Left cardiac atrium (tissue), 4 donors: ENCODE measurements at regions of chr6 and their contacts with region 1.

Region 1: GRCh38 chr6:11585426-11586016 is 48.0 kb downstream of the TMEM170B start:
- DNase-seq: no peak
- ATAC-seq: peak in 1 of 2 donors; percentile 48

Region 2: DNA sequence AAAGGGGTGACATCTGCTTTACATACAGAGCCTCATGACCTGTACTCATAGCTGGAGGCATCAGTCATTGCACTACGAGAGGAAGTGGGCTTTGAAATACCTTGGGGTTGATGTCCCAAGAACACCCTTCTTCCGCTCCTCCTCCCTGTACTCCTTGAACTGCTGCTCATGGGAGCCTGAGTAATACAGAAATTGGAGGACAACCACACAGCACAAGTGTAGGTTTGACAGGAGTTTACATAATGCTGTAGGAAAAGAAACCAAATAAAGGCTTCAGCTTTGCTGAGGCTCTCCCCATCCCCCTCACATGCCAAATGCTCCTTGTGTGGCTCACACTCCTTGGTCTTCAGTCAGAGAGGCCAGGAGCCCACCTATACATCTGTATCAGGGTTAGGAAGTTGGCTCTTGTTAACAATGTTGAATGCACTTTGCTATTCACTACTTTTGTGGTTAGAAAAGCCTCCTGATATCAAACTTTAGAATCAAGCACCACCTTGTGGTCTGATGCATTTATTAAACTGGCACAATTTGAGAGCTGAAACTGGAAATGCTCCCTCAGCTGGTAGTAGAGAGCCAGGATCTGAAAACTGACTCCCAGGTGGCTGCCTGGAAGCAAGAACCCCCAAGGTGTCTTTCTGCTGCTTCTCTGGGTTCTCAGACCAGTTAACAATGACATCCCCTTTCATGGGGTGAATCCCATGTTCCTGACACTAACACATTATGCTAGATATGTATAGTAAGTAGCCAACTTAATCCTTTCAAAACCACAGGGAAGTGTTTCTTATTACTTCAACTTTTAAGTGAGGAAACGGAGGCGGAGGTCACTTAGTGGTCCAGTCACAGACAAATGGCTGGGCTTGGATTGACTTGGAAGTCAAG is 648.4 kb after region 1 on chr6:
- intact Hi-C with region 1: loop called in 1 of 2 experiments (anchors 5 kb)
- DNase-seq: no peak
- ATAC-seq: peak; percentile 65 to 78

Region 3: GRCh38 chr6:12289933-12290820 is 704.7 kb after region 1 on chr6 and contains the start of gene EDN1:
- intact Hi-C with region 1: loop called in 1 of 2 experiments (anchors 10 kb)
- DNase-seq: peak; percentile 83
- ATAC-seq: peak; percentile 89 to 92
- total RNA-seq, gene EDN1: 2.7 to 25.4 TPM

Region 4: DNA sequence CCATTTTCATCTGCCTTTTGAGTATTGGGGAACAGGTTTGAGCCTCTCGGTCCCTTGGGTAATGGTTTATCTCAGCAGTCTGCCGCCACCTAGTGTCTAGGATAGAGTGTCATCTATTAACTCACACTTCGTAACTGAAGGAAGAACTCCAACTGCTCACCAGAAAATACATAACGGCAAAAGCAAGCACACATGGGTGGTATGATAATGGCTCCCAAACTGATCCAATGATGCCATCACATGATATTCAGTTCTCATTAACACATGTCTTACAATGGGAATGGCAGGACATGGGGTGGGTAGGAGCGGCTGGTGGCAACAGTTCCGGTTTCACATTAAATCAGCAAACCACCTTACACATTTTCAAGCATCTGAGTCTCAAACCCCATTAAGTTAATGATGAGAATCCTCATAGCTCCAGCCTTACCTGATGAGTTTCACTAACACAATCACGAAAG is 1020.4 kb after region 1 on chr6:
- intact Hi-C with region 1: loop called in 1 of 2 experiments (anchors 5 kb)
- DNase-seq: peak; percentile 35
- ATAC-seq: peak in 1 of 2 donors; percentile 69

Region 5: DNA sequence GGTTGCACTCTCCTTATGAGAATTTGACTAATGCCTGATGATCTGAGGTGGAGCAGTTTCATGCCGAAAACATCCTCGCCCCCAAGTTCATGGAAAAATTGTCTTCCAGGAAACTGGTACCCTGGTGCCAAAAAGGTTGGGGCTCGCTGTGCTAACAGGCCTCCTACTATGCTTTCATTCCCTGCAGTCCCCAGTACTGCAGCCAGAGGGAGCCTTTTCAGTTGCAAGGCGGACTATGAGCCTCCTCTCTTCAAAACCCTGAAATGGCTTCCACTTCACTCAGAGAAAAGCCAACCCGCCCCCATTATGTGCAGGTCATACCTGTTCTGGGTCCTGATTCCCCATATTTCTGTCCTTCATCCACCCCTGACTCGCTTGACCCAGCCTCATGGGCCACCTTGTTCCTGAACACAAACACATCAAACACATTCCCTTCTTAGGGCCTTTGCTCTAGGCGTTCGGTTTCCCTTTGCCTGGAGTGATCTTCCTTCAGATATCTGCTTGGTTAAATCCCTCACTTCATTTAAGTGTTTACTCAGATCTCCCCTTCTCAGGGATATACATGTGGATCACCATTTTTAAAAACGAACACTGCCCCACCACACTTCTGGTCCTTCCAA is 1304.8 kb after region 1 on chr6:
- intact Hi-C with region 1: loop called in 1 of 2 experiments (anchors 10 kb)
- DNase-seq: no peak
- ATAC-seq: no peak